ENCODE measurements at regions of chr17 and their contacts with region 1.

Region 1: GRCh38 chr17:49575579-49576087 is at the start of gene NXPH3:
- DNase-seq: peak; percentile 42
- H3K4me3 ChIP-seq: peak within 1 kb of the TSS; percentile 58 to 70 (median 62)
- H3K27ac ChIP-seq: no peak within 1 kb of the TSS
- H3K4me1 ChIP-seq: peaks cover 13% of the 10 kb centered on the region
- H3K27me3 ChIP-seq: peaks cover 4 to 8% of the 10 kb centered on the region in 2 experiments
- CTCF ChIP-seq: peak; percentile 40 to 66
- POLR2A ChIP-seq: no peak
- total RNA-seq, gene NXPH3: 2.0 and 2.1 TPM in 2 replicates

Region 2: GRCh38 chr17:49425004-49425286 is 150.7 kb before region 1 on chr17:
- CTCF ChIA-PET with region 1: no interaction called
- POLR2A ChIA-PET with region 1: no interaction called
- dilution Hi-C with region 1: no loop called
- intact Hi-C with region 1: no loop called
- DNase-seq: no peak
- H3K4me3 ChIP-seq: no peak overlapping the region
- H3K27ac ChIP-seq: no peak overlapping the region
- H3K4me1 ChIP-seq: no peaks in the 10 kb centered on the region
- H3K27me3 ChIP-seq: peaks cover 5 to 6% of the 10 kb centered on the region in 2 experiments
- CTCF ChIP-seq: no peak
- POLR2A ChIP-seq: no peak

Region 3: GRCh38 chr17:49597928-49598655 is 22.5 kb after region 1 on chr17:
- CTCF ChIA-PET with region 1: interaction called, 15 read pairs
- POLR2A ChIA-PET with region 1: no interaction called
- dilution Hi-C with region 1: no loop called
- intact Hi-C with region 1: no loop called
- DNase-seq: peak; percentile 32
- H3K4me3 ChIP-seq: no peak overlapping the region
- H3K27ac ChIP-seq: no peak overlapping the region
- H3K4me1 ChIP-seq: peaks cover 7% of the 10 kb centered on the region
- H3K27me3 ChIP-seq: no peaks in the 10 kb centered on the region
- CTCF ChIP-seq: no peak
- POLR2A ChIP-seq: no peak

Region 4: GRCh38 chr17:49670641-49671040 is 95.0 kb after region 1 on chr17:
- CTCF ChIA-PET with region 1: interaction called, 10 read pairs
- POLR2A ChIA-PET with region 1: no interaction called
- dilution Hi-C with region 1: no loop called
- intact Hi-C with region 1: no loop called
- DNase-seq: no peak
- H3K4me3 ChIP-seq: peak overlapping the region in 1 of 3 experiments; percentile 53
- H3K27ac ChIP-seq: peak overlapping the region; percentile 43
- H3K4me1 ChIP-seq: peaks cover 17% of the 10 kb centered on the region
- H3K27me3 ChIP-seq: no peaks in the 10 kb centered on the region
- CTCF ChIP-seq: no peak
- POLR2A ChIP-seq: no peak

Region 5: DNA sequence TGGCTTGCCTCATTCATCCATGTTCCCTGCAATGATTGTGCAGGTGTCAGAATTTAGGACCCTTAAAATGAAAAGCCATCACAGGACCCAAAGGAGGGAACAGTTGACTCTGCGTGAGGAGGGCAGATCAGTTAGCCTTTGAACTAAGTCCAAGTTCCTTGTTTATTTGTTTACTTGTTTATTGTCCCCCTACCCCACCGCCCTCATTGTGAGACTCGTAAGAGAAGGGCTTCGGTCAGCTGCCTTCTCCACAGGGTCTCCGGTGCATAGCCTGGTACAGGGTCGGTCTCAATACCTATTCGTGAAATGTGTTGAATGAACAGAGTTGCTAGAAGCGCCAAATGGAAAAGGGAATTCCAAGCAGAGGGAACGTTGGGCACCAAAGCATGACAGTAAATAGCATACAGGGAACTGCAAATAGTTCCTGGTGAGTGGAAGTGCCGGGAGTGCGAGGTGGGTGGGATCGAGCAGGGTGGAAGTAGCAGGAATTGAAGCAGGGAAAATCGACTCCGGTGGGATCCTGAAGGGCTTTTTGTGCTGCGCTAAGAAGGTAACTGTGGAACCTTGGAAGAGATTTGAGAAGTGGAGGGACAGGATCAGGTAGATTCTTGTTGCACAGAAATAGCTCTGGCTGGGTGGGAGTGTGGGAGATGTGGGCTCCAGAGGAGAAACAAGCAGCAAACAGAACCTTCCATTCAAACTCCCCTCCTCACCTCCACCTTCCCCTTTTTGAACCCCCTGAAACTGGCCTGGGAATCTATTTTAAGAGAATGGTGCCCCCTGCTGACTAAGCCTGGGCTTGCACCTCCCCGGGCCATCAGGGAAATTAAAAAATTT is 119.4 kb after region 1 on chr17:
- CTCF ChIA-PET with region 1: interaction called, 786 read pairs
- POLR2A ChIA-PET with region 1: no interaction called
- dilution Hi-C with region 1: no loop called
- intact Hi-C with region 1: loop called (anchors 1 kb)
- DNase-seq: peak; percentile 31
- H3K4me3 ChIP-seq: no peak overlapping the region
- H3K27ac ChIP-seq: no peak overlapping the region
- H3K4me1 ChIP-seq: peaks cover 16% of the 10 kb centered on the region
- H3K27me3 ChIP-seq: no peaks in the 10 kb centered on the region
- CTCF ChIP-seq: peak; percentile 77 to 92
- POLR2A ChIP-seq: no peak

Measured in endothelial cell of umbilical vein (primary cell).